WTC11 (cell line): ENCODE measurements at regions of chr1 and their contacts with region 1.

Region 1: GRCh38 chr1:151047925-151048645 is 534 bp downstream of the C1orf56 start:
- DNase-seq: peak; percentile 76
- ATAC-seq: peak; percentile 35
- H3K4me3 Mint-ChIP-seq: peak overlapping the region; percentile 96
- H3K27ac Mint-ChIP-seq: peak overlapping the region; percentile 97
- H3K4me1 Mint-ChIP-seq: peaks cover 17% of the 10 kb centered on the region
- H3K27me3 Mint-ChIP-seq: no peaks in the 10 kb centered on the region
- CTCF ChIP-seq: peak; percentile 30; the same call in 1 of the 2 replicates

Region 2: GRCh38 chr1:151006327-151007052 is 41.6 kb before region 1 on chr1 and contains the start of gene MINDY1:
- CTCF ChIA-PET with region 1: interaction called, 19 read pairs
- POLR2A ChIA-PET with region 1: interaction called, 3 read pairs
- DNase-seq: peak; percentile 73
- ATAC-seq: peak; percentile 89
- H3K4me3 Mint-ChIP-seq: peak within 1 kb of the TSS; percentile 94
- H3K27ac Mint-ChIP-seq: peak within 1 kb of the TSS; percentile 99
- H3K4me1 Mint-ChIP-seq: peaks cover 38% of the 10 kb centered on the region
- H3K27me3 Mint-ChIP-seq: no peaks in the 10 kb centered on the region
- CTCF ChIP-seq: no peak
- total RNA-seq, gene MINDY1: 10.1 to 11.2 TPM (median 11.0 TPM) in 3 replicates

Region 3: DNA sequence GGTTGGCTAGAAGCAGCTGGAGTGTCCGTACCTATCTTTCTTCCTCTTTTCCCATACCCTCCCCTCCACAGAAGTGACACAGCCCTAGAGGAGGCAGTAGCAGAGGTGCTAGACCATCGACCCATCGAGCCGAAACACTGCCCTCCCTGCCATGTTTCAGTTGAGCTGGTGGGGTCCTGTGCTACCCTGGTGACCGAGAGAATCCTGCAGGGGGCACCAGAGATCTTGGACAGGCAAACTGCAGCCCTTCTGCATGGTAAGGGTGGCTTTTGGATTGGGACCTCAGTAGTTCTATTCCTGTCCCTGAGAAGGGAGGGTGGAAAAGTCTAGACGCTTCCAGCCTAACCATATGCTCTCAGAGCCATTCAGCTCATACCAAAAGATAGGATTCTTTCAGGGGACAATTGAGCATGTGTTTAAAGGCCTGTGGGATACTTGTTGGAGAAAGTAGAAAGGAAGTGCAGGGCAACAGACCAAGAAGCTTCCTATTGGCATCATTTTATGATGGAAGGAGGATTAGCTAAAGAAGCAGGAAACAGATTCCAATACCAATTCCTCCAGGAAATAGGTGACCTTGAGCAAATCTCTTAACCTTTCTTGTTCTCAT is 23.4 kb before region 1 on chr1:
- CTCF ChIA-PET with region 1: interaction called, 28 read pairs
- POLR2A ChIA-PET with region 1: interaction called, 3 read pairs
- DNase-seq: peak; percentile 92
- ATAC-seq: peak; percentile 100
- H3K4me3 Mint-ChIP-seq: no peak overlapping the region
- H3K27ac Mint-ChIP-seq: peak overlapping the region; percentile 33; the same call in 1 of the 2 replicates
- H3K4me1 Mint-ChIP-seq: no peaks in the 10 kb centered on the region
- H3K27me3 Mint-ChIP-seq: no peaks in the 10 kb centered on the region
- CTCF ChIP-seq: peak; percentile 67

Region 4: GRCh38 chr1:151036363-151036762 is 11.7 kb before region 1 on chr1 and contains the start of gene BNIPL:
- CTCF ChIA-PET with region 1: interaction called, 16 read pairs
- POLR2A ChIA-PET with region 1: interaction called, 5 read pairs
- DNase-seq: no peak
- ATAC-seq: peak; percentile 69
- H3K4me3 Mint-ChIP-seq: peak within 1 kb of the TSS; percentile 51
- H3K27ac Mint-ChIP-seq: peak within 1 kb of the TSS; percentile 93
- H3K4me1 Mint-ChIP-seq: peaks cover 16% of the 10 kb centered on the region
- H3K27me3 Mint-ChIP-seq: no peaks in the 10 kb centered on the region
- CTCF ChIP-seq: no peak
- total RNA-seq, gene BNIPL: 2.5 to 4.0 TPM (median 3.8 TPM) in 3 replicates

Region 5: DNA sequence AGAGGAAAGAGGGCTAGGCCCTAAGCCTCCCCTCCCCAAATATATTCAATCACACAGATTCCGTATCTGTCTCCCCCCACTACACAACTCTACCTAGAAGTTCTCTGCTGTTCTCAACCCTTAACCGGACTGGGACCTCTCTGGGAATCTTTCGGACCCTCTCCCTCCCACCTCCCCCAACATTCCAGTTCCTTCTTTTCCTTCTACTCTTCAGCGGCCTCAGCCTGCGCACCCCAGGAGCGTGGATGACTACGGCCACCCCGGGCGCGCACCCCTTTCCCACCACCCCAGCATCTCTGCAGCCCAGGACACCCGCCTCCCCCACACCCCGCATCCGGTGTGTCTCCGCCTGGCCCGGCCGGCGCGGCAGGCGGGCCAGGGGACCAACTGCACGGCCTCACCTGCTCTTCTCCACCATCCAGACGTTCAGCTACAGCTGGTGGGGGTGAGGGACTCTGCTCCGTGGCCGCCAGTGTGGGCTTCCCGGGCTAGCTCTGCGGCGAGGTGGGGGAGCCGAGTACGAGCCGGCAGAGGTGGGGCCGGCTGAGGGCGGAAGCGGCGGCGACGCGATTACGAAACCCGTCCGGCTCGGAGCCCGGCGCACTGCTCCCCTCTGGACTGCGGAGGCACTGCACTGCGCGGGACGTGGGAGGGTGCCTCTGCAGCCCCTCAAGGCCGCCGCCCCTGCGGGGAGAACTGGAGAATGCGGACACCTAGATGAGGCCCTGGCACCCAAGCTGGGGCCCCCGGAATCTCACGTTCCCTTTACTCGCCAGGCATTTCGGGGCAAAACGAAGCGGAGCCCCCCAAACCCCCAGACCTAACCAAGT is 11.2 kb after region 1 on chr1 and contains the start of gene CDC42SE1:
- CTCF ChIA-PET with region 1: interaction called, 43 read pairs
- POLR2A ChIA-PET with region 1: interaction called, 7 read pairs
- DNase-seq: peak; percentile 86
- ATAC-seq: peak; percentile 84
- H3K4me3 Mint-ChIP-seq: peak within 1 kb of the TSS; percentile 79
- H3K27ac Mint-ChIP-seq: peak within 1 kb of the TSS; percentile 86
- H3K4me1 Mint-ChIP-seq: peaks cover 45% of the 10 kb centered on the region
- H3K27me3 Mint-ChIP-seq: no peaks in the 10 kb centered on the region
- CTCF ChIP-seq: 0 out of 2 replicates have a peak, but pooled peaks have one; percentile 35
- total RNA-seq, gene CDC42SE1: 72.8 to 76.3 TPM (median 75.5 TPM) in 3 replicates

Region 6: DNA sequence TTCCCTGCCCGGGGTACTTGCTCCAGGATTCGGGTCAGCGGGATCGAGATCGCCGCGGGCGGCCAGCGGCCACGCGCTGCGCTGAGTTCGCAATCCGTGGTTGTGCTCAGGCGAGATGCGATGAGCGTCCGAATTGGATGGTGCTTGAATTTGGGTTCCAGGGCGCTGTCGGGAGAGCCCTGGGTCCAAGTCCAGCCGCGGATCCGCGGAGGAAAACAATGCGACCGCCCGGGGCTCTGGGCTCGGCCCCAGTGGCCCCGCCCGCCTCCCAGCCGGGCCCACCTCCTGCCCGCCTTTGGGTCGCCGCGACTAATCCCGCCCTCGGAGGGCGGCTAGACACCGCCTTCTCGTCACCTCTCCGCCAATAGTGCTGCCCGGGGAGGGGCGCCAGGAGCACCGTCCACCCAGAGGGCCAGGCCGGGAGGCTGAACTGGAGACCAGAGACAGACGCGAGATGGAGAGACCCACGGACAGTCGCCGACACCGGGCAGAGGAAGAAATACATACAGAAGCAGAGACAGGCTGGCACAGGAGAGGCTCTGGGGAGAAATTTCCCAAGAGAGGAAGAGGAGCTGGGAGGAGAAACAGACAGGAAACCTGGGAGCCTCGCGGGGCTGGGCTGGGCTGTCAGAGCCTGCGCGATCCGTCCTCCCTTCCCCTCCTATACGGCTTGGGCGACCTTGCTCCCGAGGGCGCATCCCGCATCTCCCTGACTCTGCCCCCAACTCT is 98.5 kb after region 1 on chr1 and contains the start of gene SEMA6C:
- CTCF ChIA-PET with region 1: interaction called, 10 read pairs
- POLR2A ChIA-PET with region 1: no interaction called
- DNase-seq: peak; percentile 94
- ATAC-seq: peak; percentile 92
- H3K4me3 Mint-ChIP-seq: peak within 1 kb of the TSS; percentile 93
- H3K27ac Mint-ChIP-seq: no peak within 1 kb of the TSS
- H3K4me1 Mint-ChIP-seq: peaks cover 38% of the 10 kb centered on the region
- H3K27me3 Mint-ChIP-seq: peaks cover 44% of the 10 kb centered on the region
- CTCF ChIP-seq: no peak
- total RNA-seq, gene SEMA6C: 16.3 to 21.0 TPM (median 18.1 TPM) in 3 replicates

Region 7: GRCh38 chr1:151346769-151347522 is 298.9 kb after region 1 on chr1 and contains the start of gene RFX5:
- CTCF ChIA-PET with region 1: no interaction called
- POLR2A ChIA-PET with region 1: no interaction called
- DNase-seq: peak; percentile 94
- ATAC-seq: peak; percentile 93
- H3K4me3 Mint-ChIP-seq: peak within 1 kb of the TSS; percentile 83
- H3K27ac Mint-ChIP-seq: peak within 1 kb of the TSS; percentile 100
- H3K4me1 Mint-ChIP-seq: peaks cover 20% of the 10 kb centered on the region
- H3K27me3 Mint-ChIP-seq: no peaks in the 10 kb centered on the region; the same call in 1 of the 2 replicates
- CTCF ChIP-seq: no peak
- total RNA-seq, gene RFX5: 59.2 to 69.2 TPM (median 67.7 TPM) in 3 replicates